Mammary epithelial cell (primary cell): ENCODE measurements at regions of chr14 and their contacts with region 1.

Region 1: GRCh38 chr14:60195179-60195810 is 30.1 kb upstream of the DHRS7 start:
- DNase-seq: no peak
- H3K4me3 ChIP-seq: no peak overlapping the region
- H3K27ac ChIP-seq: no peak overlapping the region
- H3K4me1 ChIP-seq: peaks cover 9% of the 10 kb centered on the region
- H3K27me3 ChIP-seq: no peaks in the 10 kb centered on the region
- CTCF ChIP-seq: peak in 1 of 2 donors; percentile 21

Region 2: GRCh38 chr14:60317609-60318008 is 122.3 kb after region 1 on chr14:
- CTCF ChIA-PET with region 1: no interaction called
- dilution Hi-C with region 1: no loop called
- in situ Hi-C with region 1: no loop called
- intact Hi-C with region 1: loop called (anchors 5 kb)
- DNase-seq: no peak
- H3K4me3 ChIP-seq: no peak overlapping the region
- H3K27ac ChIP-seq: no peak overlapping the region
- H3K4me1 ChIP-seq: no peaks in the 10 kb centered on the region
- H3K27me3 ChIP-seq: no peaks in the 10 kb centered on the region
- CTCF ChIP-seq: no peak